ENCODE measurements at regions of chr1 and their contacts with region 1.

Region 1: DNA sequence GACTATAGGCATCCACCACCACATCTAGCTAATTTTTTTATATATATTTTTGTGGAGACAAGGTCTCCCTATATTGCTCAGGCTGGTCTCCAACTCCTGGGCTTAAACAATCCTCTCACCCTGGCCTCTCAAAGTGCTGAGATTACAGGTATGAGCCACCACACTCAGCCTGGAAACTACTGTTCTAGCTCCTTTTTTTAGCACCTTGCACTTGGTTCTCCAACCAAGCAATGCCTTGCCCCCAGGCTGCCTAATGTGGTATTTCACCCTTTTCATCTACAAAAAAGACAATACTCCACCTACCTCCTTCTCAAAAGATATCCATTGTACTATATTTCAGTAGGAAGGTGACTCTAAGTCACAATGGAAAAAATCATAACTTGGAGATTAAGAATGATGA is 6.7 kb downstream of the ARNT start:
- DNase-seq: peak; percentile 47
- ATAC-seq: peak; percentile 87
- H3K4me3 Mint-ChIP-seq: no peak overlapping the region
- H3K27ac Mint-ChIP-seq: no peak overlapping the region
- H3K4me1 Mint-ChIP-seq: peaks cover 38% of the 10 kb centered on the region
- H3K27me3 Mint-ChIP-seq: no peaks in the 10 kb centered on the region

Region 2: GRCh38 chr1:150603711-150604110 is 266.0 kb before region 1 on chr1:
- CTCF ChIA-PET with region 1: interaction called, 3 read pairs
- POLR2A ChIA-PET with region 1: interaction called, 13 read pairs
- intact Hi-C with region 1: no loop called
- DNase-seq: no peak
- ATAC-seq: no peak
- H3K4me3 Mint-ChIP-seq: no peak overlapping the region
- H3K27ac Mint-ChIP-seq: peak overlapping the region; percentile 74
- H3K4me1 Mint-ChIP-seq: peaks cover 21% of the 10 kb centered on the region
- H3K27me3 Mint-ChIP-seq: no peaks in the 10 kb centered on the region

Measured in activated CD4-positive, alpha-beta T cell treated with anti-CD3 and anti-CD28 coated beads for 36 hours (primary cell).